Psoas muscle (tissue), 8 donors: ENCODE measurements at regions of chr10 and their contacts with region 1.

Region 1: DNA sequence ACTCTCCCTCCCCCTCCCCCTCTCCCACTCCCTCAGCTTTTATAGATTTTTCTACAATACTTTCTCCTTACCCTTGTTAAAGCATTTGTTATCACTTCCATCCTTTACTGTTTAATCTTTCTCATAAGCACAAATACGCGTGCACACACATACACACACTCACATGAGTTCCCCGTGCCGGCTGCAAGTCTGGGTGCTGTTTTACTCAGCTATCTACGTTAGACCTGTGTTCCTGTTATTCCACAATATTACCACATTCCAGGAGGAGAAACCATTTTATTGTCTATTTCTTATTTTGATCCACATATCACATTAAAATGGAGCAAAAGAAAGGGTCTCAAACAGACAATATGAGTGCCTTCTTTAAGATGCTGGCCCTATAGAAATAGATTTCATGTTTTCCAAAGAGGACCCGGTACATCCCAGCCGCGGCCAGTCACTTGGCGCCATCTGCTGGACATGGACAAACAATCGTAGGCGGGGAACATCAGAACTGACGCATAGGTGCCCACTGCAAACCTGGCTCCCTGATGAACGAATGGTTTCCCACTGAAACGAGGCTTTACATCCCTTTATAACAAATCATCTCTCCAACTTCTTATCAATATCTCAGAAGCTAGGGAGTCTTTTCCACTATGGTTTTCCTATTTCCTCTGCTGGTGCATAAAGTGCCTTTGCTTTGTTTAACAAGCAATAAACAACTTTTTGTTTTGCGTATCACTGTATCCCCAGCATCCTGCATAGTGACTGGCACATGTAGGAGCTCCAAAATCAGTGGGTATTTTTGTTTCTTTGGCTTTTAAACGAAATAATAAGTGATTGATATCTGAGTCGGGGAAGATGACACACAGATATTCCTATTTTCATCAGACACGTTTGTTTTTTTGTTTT is 25.2 kb upstream of the OPTN start:
- DNase-seq: peak; percentile 62 to 73
- ATAC-seq: peak; percentile 63 to 85 (median 69)
- H3K4me3 ChIP-seq: no peak overlapping the region
- H3K27ac ChIP-seq: no peak overlapping the region
- H3K4me1 ChIP-seq: no peaks in the 10 kb centered on the region
- H3K27me3 ChIP-seq: peaks cover 0 to 12% (median 0%) of the 10 kb centered on the region in 3 donors
- CTCF ChIP-seq: peak; percentile 82

Region 2: GRCh38 chr10:12720217-12720981 is 354.4 kb before region 1 on chr10:
- intact Hi-C with region 1: loop called (anchors 5 kb)
- DNase-seq: peak; percentile 87 to 91
- ATAC-seq: peak; percentile 85 to 95 (median 94)
- H3K4me3 ChIP-seq: no peak overlapping the region
- H3K27ac ChIP-seq: peak overlapping the region; percentile 69
- H3K4me1 ChIP-seq: no peaks in the 10 kb centered on the region
- H3K27me3 ChIP-seq: no peaks in the 10 kb centered on the region
- CTCF ChIP-seq: no peak

Region 3: GRCh38 chr10:12782537-12782936 is 292.3 kb before region 1 on chr10:
- intact Hi-C with region 1: loop called in 1 of 2 experiments (anchors 10 kb)
- DNase-seq: peak; percentile 38 to 65
- ATAC-seq: peak; percentile 29 to 60 (median 46)
- H3K4me3 ChIP-seq: no peak overlapping the region
- H3K27ac ChIP-seq: no peak overlapping the region
- H3K4me1 ChIP-seq: no peaks in the 10 kb centered on the region
- H3K27me3 ChIP-seq: peaks cover 0 to 3% (median 0%) of the 10 kb centered on the region in 3 donors
- CTCF ChIP-seq: peak; percentile 66